PC-9 (cell line): ENCODE measurements at regions of chr11 and their contacts with region 1.

Region 1: DNA sequence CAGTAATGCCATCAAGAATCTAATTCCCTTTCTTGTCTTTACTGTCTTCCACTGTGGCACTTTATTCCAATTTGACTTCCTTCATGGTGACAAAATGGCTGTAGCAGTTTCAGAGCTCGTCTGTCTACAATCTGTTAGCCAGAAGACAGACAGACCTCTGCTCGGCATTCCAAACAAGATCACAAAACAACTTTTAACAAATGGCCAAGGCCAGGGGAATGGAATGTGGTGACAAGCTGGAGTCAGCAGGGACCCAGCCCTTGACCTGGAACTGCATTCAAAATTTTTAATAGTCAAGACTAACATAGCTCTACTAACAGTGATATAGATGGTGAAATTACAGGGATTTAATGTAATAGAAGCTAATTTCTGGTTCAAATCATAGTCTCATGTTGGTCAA is 637.2 kb downstream of the ETS1 start:
- DNase-seq: no peak
- H3K4me3 ChIP-seq: no peak overlapping the region
- H3K27ac ChIP-seq: no peak overlapping the region
- H3K4me1 ChIP-seq: no peaks in the 10 kb centered on the region
- H3K27me3 ChIP-seq: no peaks in the 10 kb centered on the region; the same call in 1 of the 2 replicates
- CTCF ChIP-seq: no peak

Region 2: GRCh38 chr11:127890030-127890611 is 60.0 kb before region 1 on chr11:
- CTCF ChIA-PET with region 1: no interaction called
- POLR2A ChIA-PET with region 1: no interaction called
- intact Hi-C with region 1: no loop called
- DNase-seq: peak in 1 of 2 experiments; percentile 46
- H3K4me3 ChIP-seq: no peak overlapping the region
- H3K27ac ChIP-seq: no peak overlapping the region
- H3K4me1 ChIP-seq: no peaks in the 10 kb centered on the region
- H3K27me3 ChIP-seq: no peaks in the 10 kb centered on the region
- CTCF ChIP-seq: no peak

Region 3: GRCh38 chr11:127965947-127966668 is 15.9 kb after region 1 on chr11:
- CTCF ChIA-PET with region 1: no interaction called
- POLR2A ChIA-PET with region 1: interaction called, 11 read pairs
- intact Hi-C with region 1: no loop called
- DNase-seq: no peak
- H3K4me3 ChIP-seq: no peak overlapping the region
- H3K27ac ChIP-seq: no peak overlapping the region
- H3K4me1 ChIP-seq: no peaks in the 10 kb centered on the region
- H3K27me3 ChIP-seq: no peaks in the 10 kb centered on the region
- CTCF ChIP-seq: no peak